HEK293 (cell line): ENCODE measurements at regions of chr9 and their contacts with region 1.

Region 1: GRCh38 chr9:121545875-121546423 is 46.3 kb upstream of the GGTA1 start:
- H3K4me3 ChIP-seq: peak overlapping the region; percentile 21
- H3K27ac ChIP-seq: no peak overlapping the region
- H3K4me1 ChIP-seq: no peaks in the 10 kb centered on the region
- CTCF ChIP-seq: peak; percentile 87

Region 2: DNA sequence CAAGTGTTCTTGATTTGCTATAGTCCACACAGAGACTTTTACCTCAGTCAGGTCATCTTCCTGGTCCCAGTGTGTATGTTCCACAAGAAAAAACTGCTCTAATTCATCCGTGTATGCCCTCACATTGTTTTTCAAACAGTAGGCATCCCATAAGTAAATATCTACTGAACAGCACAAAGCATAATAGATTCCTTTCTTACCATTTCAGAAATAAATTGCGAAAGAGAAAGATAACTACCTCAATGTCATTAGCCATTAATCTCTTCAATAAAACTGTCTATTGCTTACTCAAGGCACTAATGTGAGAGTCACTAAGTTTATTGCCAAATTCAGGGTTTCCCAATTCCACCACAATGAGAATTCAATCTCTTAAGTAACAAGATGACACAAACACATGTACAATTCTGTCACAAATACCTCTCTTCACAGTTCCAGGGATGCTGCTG is 762.3 kb before region 1 on chr9:
- CTCF ChIA-PET with region 1: no interaction called
- POLR2A ChIA-PET with region 1: no interaction called
- H3K4me3 ChIP-seq: no peak overlapping the region
- H3K27ac ChIP-seq: no peak overlapping the region
- H3K4me1 ChIP-seq: no peaks in the 10 kb centered on the region
- CTCF ChIP-seq: no peak

Region 3: GRCh38 chr9:121566481-121567465 is 20.8 kb after region 1 on chr9:
- CTCF ChIA-PET with region 1: interaction called, 13 read pairs
- POLR2A ChIA-PET with region 1: interaction called, 3 read pairs
- H3K4me3 ChIP-seq: no peak overlapping the region
- H3K27ac ChIP-seq: no peak overlapping the region
- H3K4me1 ChIP-seq: no peaks in the 10 kb centered on the region
- CTCF ChIP-seq: no peak

Region 4: GRCh38 chr9:121593066-121593465 is 47.1 kb after region 1 on chr9:
- CTCF ChIA-PET with region 1: interaction called, 19 read pairs
- POLR2A ChIA-PET with region 1: no interaction called
- H3K4me3 ChIP-seq: no peak overlapping the region
- H3K27ac ChIP-seq: no peak overlapping the region
- H3K4me1 ChIP-seq: no peaks in the 10 kb centered on the region
- CTCF ChIP-seq: no peak

Region 5: GRCh38 chr9:121686930-121687541 is 141.1 kb after region 1 on chr9:
- CTCF ChIA-PET with region 1: interaction called, 12 read pairs
- POLR2A ChIA-PET with region 1: no interaction called
- H3K4me3 ChIP-seq: no peak overlapping the region
- H3K27ac ChIP-seq: no peak overlapping the region
- H3K4me1 ChIP-seq: no peaks in the 10 kb centered on the region
- CTCF ChIP-seq: peak; percentile 70

Region 6: DNA sequence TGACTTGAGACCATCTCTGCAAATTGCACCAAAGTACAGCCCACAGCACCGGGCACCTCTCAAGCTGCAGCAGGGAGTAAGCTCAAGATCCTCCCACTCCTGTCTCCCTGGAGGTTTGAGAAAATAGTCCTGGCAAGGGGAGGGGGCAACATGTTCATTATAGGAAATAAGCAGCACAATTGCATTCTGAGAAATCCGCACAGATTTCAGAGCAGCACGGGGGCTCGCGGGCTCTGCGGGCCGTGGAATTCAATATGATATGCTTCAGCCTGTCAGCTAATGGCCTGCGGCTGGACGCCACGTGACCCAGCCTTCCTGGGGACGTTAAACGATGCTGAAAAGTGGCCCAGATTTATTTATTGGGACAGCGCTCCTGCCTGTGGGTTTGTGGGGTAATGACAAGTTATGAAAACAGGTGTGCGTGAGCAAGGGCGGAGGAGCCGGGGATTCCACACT is 261.9 kb after region 1 on chr9:
- CTCF ChIA-PET with region 1: no interaction called
- POLR2A ChIA-PET with region 1: no interaction called
- H3K4me3 ChIP-seq: no peak overlapping the region
- H3K27ac ChIP-seq: no peak overlapping the region
- H3K4me1 ChIP-seq: no peaks in the 10 kb centered on the region
- CTCF ChIP-seq: no peak

Region 7: DNA sequence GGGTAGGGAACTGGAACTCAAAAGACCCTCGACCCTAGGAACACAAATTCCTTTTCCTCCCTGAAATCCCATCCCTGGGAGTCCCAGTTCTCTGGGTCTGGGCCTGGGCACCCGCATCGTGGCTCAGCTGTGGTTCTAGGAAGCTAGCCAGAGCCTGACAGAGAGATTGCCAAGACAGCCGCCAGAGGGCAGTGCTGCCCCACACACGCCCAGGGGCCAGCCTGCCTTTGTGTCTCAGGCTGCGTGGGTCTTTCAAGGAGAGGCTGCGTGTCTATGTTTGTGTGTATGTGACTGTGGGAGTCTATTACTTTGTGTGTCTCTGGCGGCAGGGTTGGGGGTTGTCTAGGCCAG is 579.2 kb after region 1 on chr9:
- CTCF ChIA-PET with region 1: interaction called, 29 read pairs
- POLR2A ChIA-PET with region 1: interaction called, 5 read pairs
- H3K4me3 ChIP-seq: no peak overlapping the region
- H3K27ac ChIP-seq: no peak overlapping the region
- H3K4me1 ChIP-seq: no peaks in the 10 kb centered on the region
- CTCF ChIP-seq: peak; percentile 75

Region 8: DNA sequence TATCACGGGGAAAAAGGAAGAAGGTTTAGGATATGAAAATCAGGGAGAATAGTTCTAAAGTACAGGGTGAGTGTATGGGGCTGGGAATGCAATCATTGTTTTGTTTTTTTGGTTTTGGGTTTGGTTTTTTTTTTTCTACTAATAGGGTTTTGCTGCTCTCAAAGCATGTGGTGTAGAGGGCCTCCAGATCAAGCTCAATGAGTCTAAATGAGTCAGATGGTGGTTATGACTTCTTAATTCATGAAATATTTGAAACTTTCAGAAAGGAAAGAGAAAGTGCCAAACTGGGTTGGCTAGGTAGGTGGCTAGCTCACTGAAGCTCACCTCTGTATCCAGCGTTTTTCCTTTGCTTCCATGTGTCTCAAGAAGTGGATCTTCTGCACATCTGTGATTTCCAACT is 1026.5 kb after region 1 on chr9:
- CTCF ChIA-PET with region 1: no interaction called
- POLR2A ChIA-PET with region 1: no interaction called
- H3K4me3 ChIP-seq: no peak overlapping the region
- H3K27ac ChIP-seq: no peak overlapping the region
- H3K4me1 ChIP-seq: no peaks in the 10 kb centered on the region
- CTCF ChIP-seq: no peak